GM12878 (cell line): ENCODE measurements at regions of chr22 and their contacts with region 1.

Region 1: GRCh38 chr22:49917974-49918910 is at the starts of genes ALG12 and CRELD2:
- DNase-seq: peak; percentile 70
- ATAC-seq: peak; percentile 98
- H3K4me3 ChIP-seq: peak within 1 kb of the TSS; percentile 92
- H3K27ac ChIP-seq: peak within 1 kb of the TSS; percentile 89
- H3K4me1 ChIP-seq: peaks cover 19% of the 10 kb centered on the region
- H3K27me3 ChIP-seq: no peaks in the 10 kb centered on the region
- CTCF ChIP-seq: no peak
- EP300 ChIP-seq: no peak
- POLR2A ChIP-seq: peak; percentile 76
- RAD21 ChIP-seq: no peak
- polyA plus RNA-seq, gene ALG12: 0.22 to 0.37 TPM
- polyA plus RNA-seq, gene CRELD2: 9.4 to 15.0 TPM

Region 2: DNA sequence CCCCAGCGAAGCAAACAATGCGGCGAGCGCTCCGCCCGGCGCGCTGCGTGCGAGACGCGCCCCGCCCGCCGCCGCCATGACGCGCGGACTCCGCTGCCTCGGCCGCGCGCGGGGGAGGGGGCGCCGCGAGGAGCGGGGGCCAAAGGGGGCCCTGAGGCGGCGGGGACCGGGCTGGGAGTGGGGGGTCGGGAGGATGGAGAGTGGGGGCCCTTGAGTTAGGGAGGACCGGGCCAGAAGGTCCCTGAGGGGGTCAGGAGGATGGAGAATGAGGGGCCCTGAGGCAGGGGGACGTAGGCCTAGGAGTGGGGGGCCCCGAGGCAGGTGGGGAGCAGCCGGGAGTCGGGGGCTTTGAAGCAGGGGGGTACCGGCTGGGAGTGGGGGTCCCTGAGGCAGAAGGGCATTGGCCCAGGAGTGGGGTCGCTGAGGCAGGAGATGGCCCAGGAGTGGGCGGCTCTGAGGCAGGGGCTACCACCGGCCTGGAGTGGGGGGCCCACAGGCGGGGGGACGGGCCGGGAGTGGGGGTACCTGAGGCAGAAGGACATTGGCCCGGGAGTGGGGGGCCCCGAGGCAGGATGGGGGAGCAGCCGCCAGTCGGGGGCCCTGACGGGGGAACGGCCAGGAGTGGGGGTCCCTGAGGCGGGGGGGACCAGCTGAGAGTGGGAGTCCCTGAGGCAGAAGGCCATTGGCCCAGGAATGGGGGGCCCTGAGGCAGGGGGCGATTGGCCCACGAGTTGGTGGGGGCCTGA is 90.2 kb before region 1 on chr22 and contains the start of gene BRD1:
- CTCF ChIA-PET with region 1: interaction called, 4 read pairs
- POLR2A ChIA-PET with region 1: no interaction called
- RAD21 ChIA-PET with region 1: no interaction called
- SMC1A ChIA-PET with region 1: no interaction called
- in situ Hi-C with region 1: no loop called
- intact Hi-C with region 1: loop called (anchors 2 kb)
- DNase-seq: no peak
- ATAC-seq: peak; percentile 59
- H3K4me3 ChIP-seq: peak within 1 kb of the TSS; percentile 89
- H3K27ac ChIP-seq: peak within 1 kb of the TSS; percentile 78
- H3K4me1 ChIP-seq: peaks cover 35% of the 10 kb centered on the region
- H3K27me3 ChIP-seq: no peaks in the 10 kb centered on the region
- CTCF ChIP-seq: no peak
- EP300 ChIP-seq: no peak
- POLR2A ChIP-seq: no peak; the same call in 1 of the 2 replicates
- RAD21 ChIP-seq: no peak
- polyA plus RNA-seq, gene BRD1: 0.90 to 2.1 TPM